Panc1 (cell line): ENCODE measurements at regions of chr7 and their contacts with region 1.

Region 1: DNA sequence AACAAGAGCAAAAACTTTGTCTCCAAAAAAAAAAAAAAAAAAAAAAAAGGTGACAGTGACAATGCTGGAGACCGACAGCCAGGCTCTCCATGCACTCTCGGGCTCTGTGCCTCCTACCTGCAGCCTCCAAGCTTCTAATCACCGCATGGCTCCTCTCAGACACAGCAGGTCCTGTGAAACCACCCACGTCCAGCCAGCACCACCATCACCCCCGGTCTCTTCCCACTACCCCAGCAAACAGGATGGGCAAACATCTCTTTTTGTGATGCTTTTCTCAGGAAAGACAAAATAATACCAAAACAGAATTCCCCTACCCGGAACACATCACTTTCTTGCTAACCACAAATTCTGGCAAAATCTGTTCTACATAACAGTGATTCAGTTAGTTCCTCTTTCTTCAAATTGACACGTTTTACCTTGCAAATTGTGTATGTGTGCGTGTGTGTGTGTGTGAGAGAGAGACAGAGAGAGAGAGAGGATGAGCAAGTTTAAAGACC is 6.6 kb downstream of the SNX8 start:
- DNase-seq: no peak
- ATAC-seq: no peak
- H3K4me3 ChIP-seq: no peak overlapping the region
- H3K27ac ChIP-seq: no peak overlapping the region
- H3K4me1 ChIP-seq: peaks cover 19% of the 10 kb centered on the region
- H3K27me3 ChIP-seq: no peaks in the 10 kb centered on the region
- CTCF ChIP-seq: no peak

Region 2: DNA sequence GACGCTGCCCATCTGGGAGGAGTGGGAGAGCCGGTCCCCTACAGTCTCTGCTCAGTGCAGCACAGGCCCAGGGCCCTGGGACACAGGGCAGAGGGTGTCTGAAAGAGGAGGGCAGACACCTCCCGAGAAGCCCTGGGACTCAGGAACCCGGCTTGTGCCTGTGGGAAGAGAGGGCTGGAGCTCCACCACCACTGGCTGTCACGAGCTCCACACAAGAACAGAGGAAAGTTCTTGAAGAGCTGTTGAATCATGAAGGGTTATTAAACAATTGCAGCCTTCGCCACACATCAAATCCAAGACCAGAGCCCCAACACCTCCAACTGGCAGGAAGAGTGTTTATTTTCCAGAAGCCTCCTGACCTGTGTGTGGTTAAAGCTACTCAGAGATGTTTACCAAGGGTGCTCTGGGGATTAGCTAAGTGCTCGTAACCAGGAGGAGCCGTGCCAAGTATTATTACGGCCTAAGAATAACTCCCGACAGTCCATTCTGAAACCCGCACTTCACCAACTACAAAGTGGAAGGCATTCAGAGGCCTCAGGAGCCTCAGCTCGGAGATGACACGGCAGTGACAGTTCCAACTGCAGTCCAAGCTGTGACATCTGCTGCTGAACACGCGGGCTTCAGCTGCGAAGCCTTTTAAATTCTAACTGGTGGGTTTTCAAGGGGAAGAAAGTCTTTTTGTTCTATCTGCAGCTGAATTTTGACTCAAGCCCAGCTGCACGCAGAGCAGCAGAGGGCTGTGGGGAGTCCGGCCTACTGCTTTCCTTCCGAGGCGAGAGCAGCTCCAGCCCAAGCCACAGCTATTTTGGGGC is 150.0 kb before region 1 on chr7:
- CTCF ChIA-PET with region 1: no interaction called
- POLR2A ChIA-PET with region 1: no interaction called
- in situ Hi-C with region 1: no loop called
- intact Hi-C with region 1: no loop called
- DNase-seq: peak; percentile 32
- ATAC-seq: peak; percentile 90
- H3K4me3 ChIP-seq: no peak overlapping the region
- H3K27ac ChIP-seq: 0 out of 2 replicates have a peak overlapping the region, but pooled peaks have one; percentile 19
- H3K4me1 ChIP-seq: peaks cover 27% of the 10 kb centered on the region
- H3K27me3 ChIP-seq: no peaks in the 10 kb centered on the region
- CTCF ChIP-seq: no peak

Region 3: DNA sequence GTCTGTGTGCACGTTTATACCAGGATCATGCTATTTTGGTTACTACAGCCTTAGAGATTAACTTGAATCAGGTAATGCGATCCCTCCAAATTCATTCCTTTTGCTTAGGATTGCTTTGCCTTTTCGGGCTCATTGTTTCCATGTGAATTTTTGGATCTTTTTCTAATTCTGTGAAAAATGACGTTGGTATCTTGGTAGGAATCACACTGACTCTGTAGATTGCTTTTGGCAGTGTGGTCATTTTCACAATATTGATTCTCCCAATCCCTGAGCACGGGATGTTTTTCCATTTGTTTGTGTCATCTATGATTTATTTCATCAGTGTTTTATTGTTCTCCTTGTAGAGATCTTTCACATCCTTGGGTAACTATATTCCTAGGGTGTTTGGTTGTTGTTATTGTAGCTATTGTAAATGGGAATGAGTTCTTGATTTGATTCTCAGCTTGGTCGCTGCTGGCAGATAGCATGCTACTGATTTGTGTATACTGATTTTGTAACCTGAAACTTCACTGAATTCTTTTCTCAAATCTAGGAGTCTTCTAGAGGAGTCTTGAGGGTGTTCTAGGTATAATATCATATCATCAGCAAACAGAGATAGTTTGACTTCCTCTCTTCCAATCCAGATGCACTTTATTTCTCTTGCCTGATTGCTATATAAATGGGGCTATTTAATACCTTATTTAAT is 11.6 kb before region 1 on chr7:
- CTCF ChIA-PET with region 1: interaction called, 10 read pairs
- POLR2A ChIA-PET with region 1: no interaction called
- in situ Hi-C with region 1: no loop called
- intact Hi-C with region 1: no loop called
- DNase-seq: no peak
- ATAC-seq: no peak
- H3K4me3 ChIP-seq: no peak overlapping the region
- H3K27ac ChIP-seq: no peak overlapping the region
- H3K4me1 ChIP-seq: peaks cover 1% of the 10 kb centered on the region; the same call in 1 of the 2 replicates
- H3K27me3 ChIP-seq: no peaks in the 10 kb centered on the region
- CTCF ChIP-seq: no peak

Region 4: GRCh38 chr7:2444476-2444875 is 136.8 kb after region 1 on chr7:
- CTCF ChIA-PET with region 1: no interaction called
- POLR2A ChIA-PET with region 1: no interaction called
- in situ Hi-C with region 1: no loop called
- intact Hi-C with region 1: no loop called
- DNase-seq: no peak
- ATAC-seq: peak; percentile 37; the same call in 1 of the 2 replicates
- H3K4me3 ChIP-seq: no peak overlapping the region
- H3K27ac ChIP-seq: no peak overlapping the region
- H3K4me1 ChIP-seq: peaks cover 4% of the 10 kb centered on the region; the same call in 1 of the 2 replicates
- H3K27me3 ChIP-seq: no peaks in the 10 kb centered on the region
- CTCF ChIP-seq: no peak

Region 5: DNA sequence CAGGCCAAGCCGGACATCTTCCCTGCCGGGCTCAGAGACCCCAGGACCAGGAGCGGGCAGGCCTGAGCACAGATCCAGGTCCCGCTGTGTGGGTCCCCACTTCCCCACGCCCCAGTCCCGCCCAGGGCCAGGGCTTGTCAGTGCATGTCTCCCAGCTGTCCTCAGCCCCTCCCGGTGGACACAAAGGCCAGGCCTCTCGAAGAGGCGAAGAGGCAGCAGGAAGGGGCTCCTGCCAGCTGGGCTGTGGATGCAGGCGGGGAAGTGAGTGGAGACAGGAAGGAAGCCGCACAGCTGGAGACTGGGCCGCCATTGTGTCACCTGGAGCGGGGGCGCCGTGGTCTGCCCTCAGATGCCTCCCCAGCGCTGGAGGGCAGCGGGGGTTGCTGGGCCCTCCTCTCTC is 163.7 kb after region 1 on chr7:
- CTCF ChIA-PET with region 1: no interaction called
- POLR2A ChIA-PET with region 1: no interaction called
- in situ Hi-C with region 1: no loop called
- intact Hi-C with region 1: no loop called
- DNase-seq: no peak
- ATAC-seq: peak; percentile 7
- H3K4me3 ChIP-seq: no peak overlapping the region
- H3K27ac ChIP-seq: no peak overlapping the region
- H3K4me1 ChIP-seq: peaks cover 7% of the 10 kb centered on the region; the same call in 1 of the 2 replicates
- H3K27me3 ChIP-seq: no peaks in the 10 kb centered on the region
- CTCF ChIP-seq: no peak